ENCODE measurements at regions of chr10 and their contacts with region 1.

Region 1: GRCh38 chr10:93080350-93081046 is 6.8 kb downstream of the CYP26A1 start:
- DNase-seq: peak; percentile 66 to 87
- ATAC-seq: peak; percentile 81 to 84
- H3K4me3 ChIP-seq: no peak overlapping the region
- H3K27ac ChIP-seq: peak overlapping the region; percentile 51 to 81
- H3K4me1 ChIP-seq: peaks cover 26% of the 10 kb centered on the region; the same call in 2 of the 3 replicates
- CTCF ChIP-seq: peak; percentile 91
- EP300 ChIP-seq: no peak
- POLR2A ChIP-seq: no peak
- RAD21 ChIP-seq: peak; percentile 92 to 93

Region 2: DNA sequence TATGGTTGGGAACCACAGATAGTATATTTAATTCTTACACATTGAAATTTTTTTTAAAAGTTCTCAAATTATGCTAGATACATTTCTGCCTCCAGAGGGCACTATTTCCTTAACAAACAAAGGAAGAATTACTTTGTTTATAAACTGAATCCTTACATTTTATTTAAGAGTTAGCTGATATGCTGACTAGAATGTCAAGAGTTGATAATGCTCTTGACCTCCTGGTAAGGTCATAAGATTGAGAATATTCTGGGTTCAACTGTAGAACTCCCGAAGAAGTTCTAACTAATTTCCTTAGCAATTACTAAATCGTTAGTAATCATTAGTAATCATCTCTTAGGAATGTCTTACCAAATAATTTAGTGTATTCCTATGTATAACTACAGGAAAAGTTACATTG is 115.2 kb before region 1 on chr10:
- CTCF ChIA-PET with region 1: interaction called, 10 read pairs
- POLR2A ChIA-PET with region 1: no interaction called
- DNase-seq: peak; percentile 15 to 63
- ATAC-seq: no peak
- H3K4me3 ChIP-seq: no peak overlapping the region
- H3K27ac ChIP-seq: no peak overlapping the region
- H3K4me1 ChIP-seq: peaks cover 3% of the 10 kb centered on the region; the same call in 1 of the 3 replicates
- CTCF ChIP-seq: peak; percentile 83
- EP300 ChIP-seq: no peak
- POLR2A ChIP-seq: no peak
- RAD21 ChIP-seq: peak; percentile 68 to 71

Region 3: DNA sequence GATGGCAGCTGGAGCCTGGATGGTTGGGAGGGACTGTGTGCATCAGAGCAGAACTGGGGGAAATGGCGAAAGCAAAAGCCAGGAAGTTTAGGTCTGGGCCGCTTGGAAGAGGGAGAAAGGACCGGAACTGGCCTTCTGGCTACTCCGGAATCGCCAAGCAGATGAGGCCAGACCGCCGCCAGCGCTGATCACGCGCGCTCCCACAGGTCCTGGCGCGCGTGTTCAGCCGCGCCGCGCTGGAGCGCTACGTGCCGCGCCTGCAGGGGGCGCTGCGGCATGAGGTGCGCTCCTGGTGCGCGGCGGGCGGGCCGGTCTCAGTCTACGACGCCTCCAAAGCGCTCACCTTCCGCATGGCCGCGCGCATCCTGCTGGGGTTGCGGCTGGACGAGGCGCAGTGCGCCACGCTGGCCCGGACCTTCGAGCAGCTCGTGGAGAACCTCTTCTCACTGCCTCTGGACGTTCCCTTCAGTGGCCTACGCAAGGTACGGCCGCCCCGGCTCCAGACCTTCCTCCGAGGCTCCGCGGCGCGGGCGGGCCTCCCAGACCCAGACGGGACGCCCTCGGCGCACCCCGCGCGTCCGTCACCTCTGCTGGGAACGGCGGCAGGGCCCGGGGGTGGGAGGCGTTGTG is 17.9 kb before region 1 on chr10:
- CTCF ChIA-PET with region 1: interaction called, 16 read pairs
- POLR2A ChIA-PET with region 1: no interaction called
- DNase-seq: peak in 1 of 2 experiments; percentile 38
- ATAC-seq: peak; percentile 40 to 84; a peak in 4 of 6 replicates
- H3K4me3 ChIP-seq: no peak overlapping the region
- H3K27ac ChIP-seq: no peak overlapping the region
- H3K4me1 ChIP-seq: no peaks in the 10 kb centered on the region
- CTCF ChIP-seq: peak; percentile 44
- EP300 ChIP-seq: no peak
- POLR2A ChIP-seq: no peak
- RAD21 ChIP-seq: no peak

Region 4: GRCh38 chr10:93095225-93095624 is 14.7 kb after region 1 on chr10:
- CTCF ChIA-PET with region 1: interaction called, 46 read pairs
- POLR2A ChIA-PET with region 1: no interaction called
- DNase-seq: no peak
- ATAC-seq: peak in 1 of 2 experiments; percentile 38; a peak in 1 of 6 replicates
- H3K4me3 ChIP-seq: no peak overlapping the region
- H3K27ac ChIP-seq: no peak overlapping the region
- H3K4me1 ChIP-seq: no peaks in the 10 kb centered on the region
- CTCF ChIP-seq: no peak
- EP300 ChIP-seq: no peak
- POLR2A ChIP-seq: no peak
- RAD21 ChIP-seq: no peak

Region 5: GRCh38 chr10:93280699-93281366 is 200.3 kb after region 1 on chr10:
- CTCF ChIA-PET with region 1: interaction called, 30 read pairs
- POLR2A ChIA-PET with region 1: no interaction called
- DNase-seq: no peak
- ATAC-seq: no peak
- H3K4me3 ChIP-seq: no peak overlapping the region
- H3K27ac ChIP-seq: no peak overlapping the region
- H3K4me1 ChIP-seq: no peaks in the 10 kb centered on the region
- CTCF ChIP-seq: no peak
- EP300 ChIP-seq: no peak
- POLR2A ChIP-seq: no peak
- RAD21 ChIP-seq: no peak

Region 6: GRCh38 chr10:93319896-93320295 is 239.4 kb after region 1 on chr10:
- CTCF ChIA-PET with region 1: interaction called, 21 read pairs
- POLR2A ChIA-PET with region 1: no interaction called
- DNase-seq: no peak
- ATAC-seq: no peak
- H3K4me3 ChIP-seq: no peak overlapping the region
- H3K27ac ChIP-seq: no peak overlapping the region
- H3K4me1 ChIP-seq: no peaks in the 10 kb centered on the region
- CTCF ChIP-seq: no peak
- EP300 ChIP-seq: no peak
- POLR2A ChIP-seq: no peak
- RAD21 ChIP-seq: no peak

Region 7: GRCh38 chr10:93352638-93353383 is 272.3 kb after region 1 on chr10:
- CTCF ChIA-PET with region 1: interaction called, 16 read pairs
- POLR2A ChIA-PET with region 1: no interaction called
- DNase-seq: peak; percentile 38 to 44
- ATAC-seq: peak in 1 of 2 experiments; percentile 58; a peak in 3 of 6 replicates
- H3K4me3 ChIP-seq: no peak overlapping the region
- H3K27ac ChIP-seq: no peak overlapping the region
- H3K4me1 ChIP-seq: no peaks in the 10 kb centered on the region
- CTCF ChIP-seq: peak; percentile 86
- EP300 ChIP-seq: no peak
- POLR2A ChIP-seq: no peak
- RAD21 ChIP-seq: peak; percentile 49 to 58